Tibial artery (tissue), 4 donors: ENCODE measurements at regions of chr10 and their contacts with region 1.

Region 1: GRCh38 chr10:122462533-122463465 is 1.4 kb downstream of the HTRA1 start:
- DNase-seq: peak; percentile 79 to 88
- H3K4me3 ChIP-seq: peak overlapping the region; percentile 85 to 95
- H3K27ac ChIP-seq: peak overlapping the region; percentile 93 to 94
- H3K4me1 ChIP-seq: peaks cover 0 to 52% (median 28%) of the 10 kb centered on the region in 4 donors
- H3K27me3 ChIP-seq: no peaks in the 10 kb centered on the region
- CTCF ChIP-seq: no peak

Region 2: GRCh38 chr10:122495406-122496340 is 32.9 kb after region 1 on chr10:
- intact Hi-C with region 1: loop called (anchors 2 kb)
- DNase-seq: peak; percentile 81 to 88
- H3K4me3 ChIP-seq: peak overlapping the region in 1 of 2 donors; percentile 11
- H3K27ac ChIP-seq: peak overlapping the region; percentile 76 to 91
- H3K4me1 ChIP-seq: peaks cover 5 to 94% (median 75%) of the 10 kb centered on the region in 4 donors
- H3K27me3 ChIP-seq: no peaks in the 10 kb centered on the region
- CTCF ChIP-seq: no peak

Region 3: DNA sequence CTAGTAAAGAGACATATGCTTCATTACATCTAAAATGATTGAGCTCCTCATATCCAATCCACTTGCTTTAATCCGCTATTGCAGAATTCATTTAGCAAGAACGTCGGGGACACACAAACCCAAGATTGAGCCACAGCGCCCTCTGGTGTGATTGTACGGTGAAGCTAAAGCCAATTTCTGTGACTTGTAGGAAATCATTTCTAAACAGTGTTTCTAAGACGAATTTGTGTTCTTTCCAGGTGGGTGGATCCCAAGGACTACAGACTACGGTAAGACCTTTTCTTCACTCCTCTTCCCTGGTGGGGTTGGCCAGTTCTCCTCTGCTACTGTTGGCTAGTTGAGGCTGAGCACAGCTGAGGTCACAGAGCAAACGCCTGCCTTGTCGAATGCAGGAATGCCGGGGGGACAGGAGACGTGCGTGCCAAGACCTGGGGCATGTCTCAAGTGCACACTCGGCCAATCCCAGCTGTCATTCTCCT is 103.0 kb after region 1 on chr10:
- intact Hi-C with region 1: loop called (anchors 10 kb)
- DNase-seq: peak; percentile 83 to 84
- H3K4me3 ChIP-seq: peak overlapping the region; percentile 11 to 33
- H3K27ac ChIP-seq: no peak overlapping the region
- H3K4me1 ChIP-seq: peaks cover 0 to 8% (median 5%) of the 10 kb centered on the region in 4 donors
- H3K27me3 ChIP-seq: peaks cover 0 to 4% of the 10 kb centered on the region in 2 donors
- CTCF ChIP-seq: peak; percentile 86